ENCODE measurements at regions of chr10 and their contacts with region 1.

Region 1: GRCh38 chr10:88386821-88387773 is 196.0 kb downstream of the RNLS start:
- DNase-seq: peak in 1 of 2 donors; percentile 57
- ATAC-seq: peak; percentile 82 to 93 (median 92)
- H3K4me3 ChIP-seq: peak overlapping the region in 7 of 10 donors; percentile 9 to 39 (median 31)
- H3K27ac ChIP-seq: peak overlapping the region; percentile 1 to 75 (median 56)
- H3K4me1 ChIP-seq: peaks cover 0 to 54% (median 29%) of the 10 kb centered on the region in 9 donors
- H3K27me3 ChIP-seq: no peaks in the 10 kb centered on the region
- CTCF ChIP-seq: no peak

Region 2: GRCh38 chr10:88042160-88043100 is 344.7 kb before region 1 on chr10:
- intact Hi-C with region 1: loop called in 2 of 10 experiments (anchors 10 kb)
- DNase-seq: peak in 1 of 2 donors; percentile 17
- ATAC-seq: peak in 5 of 8 donors; percentile 38 to 71 (median 65)
- H3K4me3 ChIP-seq: no peak overlapping the region
- H3K27ac ChIP-seq: peak overlapping the region in 6 of 10 donors; percentile 26 to 65 (median 44)
- H3K4me1 ChIP-seq: peaks cover 3 to 71% (median 18%) of the 10 kb centered on the region in 9 donors
- H3K27me3 ChIP-seq: no peaks in the 10 kb centered on the region
- CTCF ChIP-seq: no peak

Region 3: GRCh38 chr10:88147000-88147798 is 239.9 kb before region 1 on chr10:
- intact Hi-C with region 1: loop called in 2 of 10 experiments (anchors 2 to 10 kb)
- DNase-seq: peak in 1 of 2 donors; percentile 65
- ATAC-seq: peak; percentile 80 to 94 (median 87)
- H3K4me3 ChIP-seq: no peak overlapping the region
- H3K27ac ChIP-seq: peak overlapping the region; percentile 36 to 70 (median 50)
- H3K4me1 ChIP-seq: peaks cover 0 to 11% (median 0%) of the 10 kb centered on the region in 9 donors
- H3K27me3 ChIP-seq: no peaks in the 10 kb centered on the region
- CTCF ChIP-seq: no peak

Region 4: DNA sequence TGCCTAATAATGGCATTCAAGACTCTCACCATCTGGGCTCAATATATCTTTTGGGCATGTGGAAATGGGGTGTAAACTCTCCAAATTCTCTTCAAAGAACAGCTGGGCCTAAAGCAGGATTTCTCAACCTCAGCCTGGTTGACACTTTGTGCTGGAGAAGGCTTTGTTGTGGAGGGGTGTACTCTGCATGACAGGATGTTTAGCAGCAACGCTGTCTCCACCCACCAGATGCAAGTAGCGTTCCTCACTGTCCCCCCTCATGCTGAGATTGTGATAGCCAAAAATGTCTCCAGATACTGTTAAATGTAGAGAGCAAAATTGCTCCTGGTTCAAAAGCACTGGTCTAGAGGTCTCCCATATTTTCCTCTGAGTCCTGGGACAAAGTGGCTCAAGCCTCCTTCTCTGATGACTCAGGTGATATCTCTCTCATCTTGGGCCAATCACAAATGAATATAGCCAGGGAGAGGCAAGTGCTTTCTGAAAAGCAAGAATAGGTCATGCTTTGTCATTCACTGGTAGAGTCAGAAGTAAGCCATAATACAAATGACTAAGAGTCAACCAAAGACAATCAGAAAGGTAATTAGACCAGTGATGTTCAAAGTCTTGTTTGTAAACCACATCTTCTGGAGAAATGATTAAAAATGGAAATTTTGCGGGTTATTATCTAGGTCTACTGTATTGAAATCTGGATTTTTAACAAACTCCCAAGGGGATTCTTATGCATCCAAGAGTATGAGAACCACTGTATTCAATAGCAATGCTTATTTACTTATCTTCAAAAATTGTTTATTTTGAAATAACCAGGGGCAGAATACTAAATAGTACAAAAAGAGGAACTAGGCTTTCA is 192.8 kb before region 1 on chr10:
- intact Hi-C with region 1: no loop called
- DNase-seq: no peak
- ATAC-seq: peak in 4 of 8 donors; percentile 44 to 65 (median 56)
- H3K4me3 ChIP-seq: no peak overlapping the region
- H3K27ac ChIP-seq: no peak overlapping the region
- H3K4me1 ChIP-seq: peaks cover 0 to 30% (median 9%) of the 10 kb centered on the region in 9 donors
- H3K27me3 ChIP-seq: no peaks in the 10 kb centered on the region
- CTCF ChIP-seq: no peak

Region 5: DNA sequence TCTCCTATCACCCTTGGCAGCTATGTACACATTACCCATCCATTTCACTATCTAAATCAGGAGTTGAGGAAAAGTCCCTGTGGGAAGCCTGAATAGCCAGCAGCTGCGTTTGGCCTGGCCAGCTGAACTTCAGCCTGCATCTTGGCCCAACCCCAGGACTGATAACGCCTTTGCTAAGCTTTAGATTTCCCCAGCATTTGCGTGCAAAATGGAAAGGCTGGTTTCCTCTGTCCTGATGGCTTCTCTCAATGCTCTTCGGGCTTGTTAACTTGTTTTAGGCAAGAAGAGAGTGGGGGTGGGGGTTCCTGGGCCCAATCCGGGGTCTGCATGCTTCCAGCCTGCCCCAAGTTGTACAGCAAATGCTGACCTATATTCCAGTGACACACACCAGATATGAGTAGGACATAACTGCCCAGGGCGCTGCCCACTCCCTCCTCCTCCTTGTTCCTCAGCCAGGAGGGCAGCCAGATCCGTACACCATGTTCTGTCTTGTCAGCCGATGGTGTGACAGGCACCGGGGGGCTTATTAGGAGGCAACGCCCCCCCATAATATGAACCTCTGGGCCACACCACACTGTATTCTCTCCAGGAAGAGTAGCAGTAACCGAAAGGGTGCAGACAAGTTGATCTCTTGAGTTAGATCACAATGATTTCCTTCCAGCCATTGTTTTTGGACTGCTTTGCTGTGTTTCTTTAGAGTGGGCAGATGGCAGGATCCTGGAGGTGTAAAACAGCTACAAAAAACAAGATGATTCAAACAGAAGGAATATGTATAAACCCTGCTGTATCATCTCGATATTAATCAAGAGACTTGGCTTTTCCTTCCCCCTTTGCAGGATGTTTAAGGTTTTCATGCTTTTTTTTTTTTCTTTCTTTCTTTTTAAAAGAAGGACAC is 143.0 kb before region 1 on chr10:
- intact Hi-C with region 1: loop called in 5 of 10 experiments (anchors 2 to 10 kb)
- DNase-seq: peak; percentile 76 to 87
- ATAC-seq: peak; percentile 85 to 98 (median 90)
- H3K4me3 ChIP-seq: peak overlapping the region in 7 of 10 donors; percentile 1 to 38 (median 26)
- H3K27ac ChIP-seq: peak overlapping the region; percentile 65 to 90 (median 81)
- H3K4me1 ChIP-seq: peaks cover 8 to 58% (median 42%) of the 10 kb centered on the region in 9 donors
- H3K27me3 ChIP-seq: no peaks in the 10 kb centered on the region
- CTCF ChIP-seq: no peak

Region 6: DNA sequence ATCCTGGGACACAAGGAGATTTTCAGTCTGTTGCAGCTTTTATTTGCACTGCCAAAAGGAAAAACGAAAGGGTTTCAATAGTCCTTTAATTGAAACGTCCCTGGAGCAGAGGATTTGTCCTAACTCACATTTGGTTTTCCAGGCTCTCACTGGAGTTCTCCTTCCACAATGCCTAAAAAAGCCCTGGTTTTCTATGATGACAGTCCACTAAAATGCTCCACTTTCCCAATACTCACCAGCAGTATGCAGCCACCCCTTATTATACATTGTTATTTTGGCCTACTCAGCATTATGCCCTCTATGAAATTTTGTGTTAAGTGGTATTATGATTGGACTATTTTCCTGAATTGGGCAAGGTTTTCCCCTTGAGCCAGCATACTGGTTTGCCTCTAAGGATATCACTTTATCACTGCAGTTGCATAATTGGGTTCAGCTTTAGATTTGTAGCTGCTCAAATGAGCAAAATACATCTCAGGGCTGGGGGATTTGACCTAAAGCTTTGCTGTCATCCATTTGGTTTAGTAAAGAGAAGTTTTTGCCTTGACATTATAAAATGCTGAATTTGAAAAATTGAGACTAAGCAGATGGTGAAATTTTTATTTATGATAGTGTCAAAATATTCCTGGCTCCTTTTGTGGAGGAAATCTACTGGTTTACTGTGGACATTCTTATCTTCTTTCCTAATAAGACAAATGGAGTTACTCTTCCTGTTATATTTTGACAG is 43.2 kb before region 1 on chr10:
- intact Hi-C with region 1: loop called in 1 of 10 experiments (anchors 5 kb)
- DNase-seq: no peak
- ATAC-seq: peak in 6 of 8 donors; percentile 27 to 73 (median 52)
- H3K4me3 ChIP-seq: no peak overlapping the region
- H3K27ac ChIP-seq: peak overlapping the region in 8 of 10 donors; percentile 0 to 70 (median 28)
- H3K4me1 ChIP-seq: peaks cover 0 to 34% (median 10%) of the 10 kb centered on the region in 9 donors
- H3K27me3 ChIP-seq: no peaks in the 10 kb centered on the region
- CTCF ChIP-seq: no peak

Region 7: GRCh38 chr10:88538038-88538437 is 150.9 kb after region 1 on chr10:
- intact Hi-C with region 1: no loop called
- DNase-seq: no peak
- ATAC-seq: peak in 3 of 8 donors; percentile 36 to 62 (median 57)
- H3K4me3 ChIP-seq: no peak overlapping the region
- H3K27ac ChIP-seq: peak overlapping the region in 7 of 10 donors; percentile 0 to 51 (median 8)
- H3K4me1 ChIP-seq: peaks cover 0 to 13% (median 5%) of the 10 kb centered on the region in 9 donors
- H3K27me3 ChIP-seq: no peaks in the 10 kb centered on the region
- CTCF ChIP-seq: no peak